ENCODE measurements at regions of chr1 and their contacts with region 1.

Region 1: DNA sequence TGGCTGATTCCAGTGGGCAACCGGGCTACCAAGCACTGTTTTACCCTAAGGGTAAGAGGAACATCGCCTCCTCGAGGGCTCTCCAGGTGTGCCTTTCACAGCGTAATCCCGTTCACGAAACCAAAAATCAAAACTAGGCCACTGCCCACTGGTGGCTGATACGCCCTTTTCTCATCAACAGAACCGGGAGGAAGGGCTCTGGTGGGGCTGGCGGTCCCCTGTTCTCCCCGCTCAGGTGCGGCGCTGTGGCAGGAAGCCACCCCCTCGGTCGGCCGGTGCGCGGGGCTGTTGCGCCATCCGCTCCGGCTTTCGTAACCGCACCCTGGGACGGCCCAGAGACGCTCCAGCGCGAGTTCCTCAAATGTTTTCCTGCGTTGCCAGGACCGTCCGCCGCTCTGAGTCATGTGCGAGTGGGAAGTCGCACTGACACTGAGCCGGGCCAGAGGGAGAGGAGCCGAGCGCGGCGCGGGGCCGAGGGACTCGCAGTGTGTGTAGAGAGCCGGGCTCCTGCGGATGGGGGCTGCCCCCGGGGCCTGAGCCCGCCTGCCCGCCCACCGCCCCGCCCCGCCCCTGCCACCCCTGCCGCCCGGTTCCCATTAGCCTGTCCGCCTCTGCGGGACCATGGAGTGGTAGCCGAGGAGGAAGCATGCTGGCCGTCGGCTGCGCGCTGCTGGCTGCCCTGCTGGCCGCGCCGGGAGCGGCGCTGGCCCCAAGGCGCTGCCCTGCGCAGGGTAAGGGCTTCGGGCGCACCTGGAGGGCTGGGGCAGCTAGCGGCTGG is at the start of gene IL6R:
- DNase-seq: peak; percentile 57 to 91 (median 76)
- ATAC-seq: peak; percentile 65
- H3K4me3 ChIP-seq: peak within 1 kb of the TSS; percentile 89
- H3K4me3 Mint-ChIP-seq: peak within 1 kb of the TSS; percentile 96
- H3K27ac ChIP-seq: peak within 1 kb of the TSS; percentile 81 to 92
- H3K27ac Mint-ChIP-seq: peak within 1 kb of the TSS; percentile 95
- H3K4me1 ChIP-seq: peaks cover 88% of the 10 kb centered on the region
- H3K4me1 Mint-ChIP-seq: peaks cover 84% of the 10 kb centered on the region
- H3K27me3 ChIP-seq: no peaks in the 10 kb centered on the region
- H3K27me3 Mint-ChIP-seq: no peaks in the 10 kb centered on the region
- CTCF ChIP-seq: peak; percentile 73
- total RNA-seq, gene IL6R: 31.7 to 35.0 TPM

Region 2: GRCh38 chr1:154091706-154092105 is 313.5 kb before region 1 on chr1:
- CTCF ChIA-PET with region 1: no interaction called
- POLR2A ChIA-PET with region 1: no interaction called
- intact Hi-C with region 1: no loop called
- DNase-seq: no peak
- ATAC-seq: no peak
- H3K4me3 ChIP-seq: no peak overlapping the region
- H3K4me3 Mint-ChIP-seq: no peak overlapping the region
- H3K27ac ChIP-seq: no peak overlapping the region
- H3K27ac Mint-ChIP-seq: no peak overlapping the region
- H3K4me1 ChIP-seq: no peaks in the 10 kb centered on the region
- H3K4me1 Mint-ChIP-seq: no peaks in the 10 kb centered on the region
- H3K27me3 ChIP-seq: no peaks in the 10 kb centered on the region
- H3K27me3 Mint-ChIP-seq: no peaks in the 10 kb centered on the region
- CTCF ChIP-seq: no peak

Region 3: DNA sequence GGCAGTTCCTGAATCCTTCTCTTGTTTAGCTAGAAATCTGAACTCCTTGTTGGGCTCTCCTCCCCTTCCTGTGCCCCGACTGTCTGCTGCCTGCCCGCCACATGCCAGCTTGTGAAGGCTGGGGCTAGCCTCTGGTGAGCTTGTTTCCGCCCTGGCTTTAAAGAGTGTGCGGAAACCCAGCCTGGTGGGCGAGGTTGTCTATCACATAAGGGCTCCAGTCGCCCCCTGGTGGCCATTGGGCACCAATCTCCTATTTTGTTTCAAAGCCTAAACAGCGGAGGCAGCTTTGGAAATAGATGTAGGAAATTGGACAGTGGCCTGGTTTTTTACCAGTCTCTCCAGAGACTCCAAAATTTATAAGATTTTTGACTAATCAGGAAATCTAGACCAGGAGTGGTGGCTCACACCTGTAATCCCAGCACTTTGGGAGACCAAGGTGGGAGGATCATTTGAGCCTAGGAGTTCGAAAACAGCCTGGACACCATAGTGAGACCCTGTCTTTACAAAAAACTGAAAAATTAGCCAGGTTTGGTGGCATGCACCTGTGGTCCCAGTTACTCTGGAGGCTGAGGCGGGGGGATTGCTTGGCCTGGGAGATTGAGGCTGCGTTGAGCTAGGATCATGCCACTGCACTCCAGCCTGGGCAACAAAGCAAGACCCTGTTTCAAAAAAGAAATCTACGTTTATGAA is 70.0 kb before region 1 on chr1:
- CTCF ChIA-PET with region 1: interaction called, 7 read pairs
- POLR2A ChIA-PET with region 1: interaction called, 22 read pairs
- intact Hi-C with region 1: no loop called
- DNase-seq: peak; percentile 82 to 96 (median 90)
- ATAC-seq: peak; percentile 95
- H3K4me3 ChIP-seq: no peak overlapping the region
- H3K4me3 Mint-ChIP-seq: peak overlapping the region; percentile 77
- H3K27ac ChIP-seq: peak overlapping the region; percentile 42 to 64
- H3K27ac Mint-ChIP-seq: peak overlapping the region; percentile 75
- H3K4me1 ChIP-seq: peaks cover 93% of the 10 kb centered on the region
- H3K4me1 Mint-ChIP-seq: peaks cover 79% of the 10 kb centered on the region
- H3K27me3 ChIP-seq: no peaks in the 10 kb centered on the region
- H3K27me3 Mint-ChIP-seq: no peaks in the 10 kb centered on the region
- CTCF ChIP-seq: peak; percentile 96

Region 4: GRCh38 chr1:154386643-154387352 is 18.4 kb before region 1 on chr1:
- CTCF ChIA-PET with region 1: interaction called, 7 read pairs
- POLR2A ChIA-PET with region 1: interaction called, 58 read pairs
- intact Hi-C with region 1: loop called in 1 of 2 experiments (anchors 2 kb)
- DNase-seq: peak; percentile 43 to 93 (median 65)
- ATAC-seq: peak; percentile 85
- H3K4me3 ChIP-seq: peak overlapping the region; percentile 27
- H3K4me3 Mint-ChIP-seq: peak overlapping the region; percentile 85
- H3K27ac ChIP-seq: peak overlapping the region; percentile 86 to 88
- H3K27ac Mint-ChIP-seq: peak overlapping the region; percentile 89
- H3K4me1 ChIP-seq: peaks cover 48% of the 10 kb centered on the region
- H3K4me1 Mint-ChIP-seq: peaks cover 45% of the 10 kb centered on the region
- H3K27me3 ChIP-seq: no peaks in the 10 kb centered on the region
- H3K27me3 Mint-ChIP-seq: no peaks in the 10 kb centered on the region
- CTCF ChIP-seq: no peak

Region 5: GRCh38 chr1:154442006-154442740 is 37.0 kb after region 1 on chr1:
- CTCF ChIA-PET with region 1: interaction called, 3 read pairs
- POLR2A ChIA-PET with region 1: interaction called, 86 read pairs
- intact Hi-C with region 1: loop called (anchors 2 to 5 kb)
- DNase-seq: peak in 1 of 14 experiments; percentile 47
- ATAC-seq: peak; percentile 6
- H3K4me3 ChIP-seq: peak overlapping the region; percentile 20
- H3K4me3 Mint-ChIP-seq: peak overlapping the region; percentile 81
- H3K27ac ChIP-seq: peak overlapping the region; percentile 72 to 75
- H3K27ac Mint-ChIP-seq: peak overlapping the region; percentile 94
- H3K4me1 ChIP-seq: peaks cover 77% of the 10 kb centered on the region
- H3K4me1 Mint-ChIP-seq: peaks cover 75% of the 10 kb centered on the region
- H3K27me3 ChIP-seq: no peaks in the 10 kb centered on the region
- H3K27me3 Mint-ChIP-seq: no peaks in the 10 kb centered on the region
- CTCF ChIP-seq: peak; percentile 34

Region 6: DNA sequence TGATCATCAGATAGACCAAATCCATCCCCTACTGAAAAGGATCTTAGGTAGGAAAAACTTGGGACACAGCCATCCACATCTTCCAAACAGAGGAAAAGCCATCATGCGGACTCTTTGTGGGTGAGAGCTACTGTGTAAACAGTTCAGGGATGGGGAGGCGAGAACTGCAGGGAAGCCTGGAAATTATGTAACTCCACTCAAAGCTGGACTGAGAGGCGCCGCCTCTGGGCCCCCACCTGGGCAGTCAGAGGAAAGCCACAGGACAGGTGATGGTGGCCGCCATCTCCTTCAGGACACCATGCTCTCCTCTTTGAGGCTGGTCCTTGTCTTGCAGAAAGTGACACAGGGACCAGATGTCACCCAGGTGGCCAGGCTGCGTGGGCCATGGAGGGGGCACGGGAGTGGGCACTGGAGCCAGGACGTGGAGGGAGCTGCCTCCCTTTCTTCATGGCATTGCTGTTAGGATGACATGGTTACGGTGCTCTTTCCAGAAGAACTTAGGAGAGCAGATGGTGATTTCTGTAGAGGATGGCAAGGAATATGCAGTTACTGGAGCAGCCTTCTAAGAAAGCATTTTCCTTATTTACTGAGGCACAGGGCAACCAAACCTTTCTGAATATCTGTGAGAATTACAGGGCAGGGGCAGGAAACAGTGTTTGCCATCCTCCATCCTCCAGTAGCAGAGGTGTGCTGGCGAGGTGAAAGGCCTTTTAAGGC is 64.8 kb after region 1 on chr1:
- CTCF ChIA-PET with region 1: interaction called, 4 read pairs
- POLR2A ChIA-PET with region 1: interaction called, 26 read pairs
- intact Hi-C with region 1: loop called in 1 of 2 experiments (anchors 2 kb)
- DNase-seq: no peak
- ATAC-seq: no peak
- H3K4me3 ChIP-seq: no peak overlapping the region
- H3K4me3 Mint-ChIP-seq: no peak overlapping the region
- H3K27ac ChIP-seq: peak overlapping the region; percentile 15 to 21
- H3K27ac Mint-ChIP-seq: peak overlapping the region; percentile 93
- H3K4me1 ChIP-seq: peaks cover 50% of the 10 kb centered on the region
- H3K4me1 Mint-ChIP-seq: peaks cover 58% of the 10 kb centered on the region
- H3K27me3 ChIP-seq: no peaks in the 10 kb centered on the region
- H3K27me3 Mint-ChIP-seq: no peaks in the 10 kb centered on the region
- CTCF ChIP-seq: no peak

Region 7: GRCh38 chr1:154546264-154547063 is 141.3 kb after region 1 on chr1:
- CTCF ChIA-PET with region 1: interaction called, 4 read pairs
- POLR2A ChIA-PET with region 1: interaction called, 3 read pairs
- intact Hi-C with region 1: loop called in 1 of 2 experiments (anchors 5 kb)
- DNase-seq: peak; percentile 28 to 77 (median 38)
- ATAC-seq: peak; percentile 93
- H3K4me3 ChIP-seq: no peak overlapping the region
- H3K4me3 Mint-ChIP-seq: no peak overlapping the region
- H3K27ac ChIP-seq: no peak overlapping the region
- H3K27ac Mint-ChIP-seq: no peak overlapping the region
- H3K4me1 ChIP-seq: no peaks in the 10 kb centered on the region
- H3K4me1 Mint-ChIP-seq: peaks cover 4% of the 10 kb centered on the region
- H3K27me3 ChIP-seq: no peaks in the 10 kb centered on the region
- H3K27me3 Mint-ChIP-seq: no peaks in the 10 kb centered on the region
- CTCF ChIP-seq: peak; percentile 68

Region 8: GRCh38 chr1:154837672-154838171 is 432.5 kb after region 1 on chr1:
- CTCF ChIA-PET with region 1: no interaction called
- POLR2A ChIA-PET with region 1: no interaction called
- intact Hi-C with region 1: no loop called
- DNase-seq: no peak
- ATAC-seq: no peak
- H3K4me3 ChIP-seq: no peak overlapping the region
- H3K4me3 Mint-ChIP-seq: no peak overlapping the region
- H3K27ac ChIP-seq: no peak overlapping the region
- H3K27ac Mint-ChIP-seq: no peak overlapping the region
- H3K4me1 ChIP-seq: no peaks in the 10 kb centered on the region
- H3K4me1 Mint-ChIP-seq: no peaks in the 10 kb centered on the region
- H3K27me3 ChIP-seq: peaks cover 0 to 3% of the 10 kb centered on the region in 2 experiments
- H3K27me3 Mint-ChIP-seq: no peaks in the 10 kb centered on the region
- CTCF ChIP-seq: no peak

Region 9: DNA sequence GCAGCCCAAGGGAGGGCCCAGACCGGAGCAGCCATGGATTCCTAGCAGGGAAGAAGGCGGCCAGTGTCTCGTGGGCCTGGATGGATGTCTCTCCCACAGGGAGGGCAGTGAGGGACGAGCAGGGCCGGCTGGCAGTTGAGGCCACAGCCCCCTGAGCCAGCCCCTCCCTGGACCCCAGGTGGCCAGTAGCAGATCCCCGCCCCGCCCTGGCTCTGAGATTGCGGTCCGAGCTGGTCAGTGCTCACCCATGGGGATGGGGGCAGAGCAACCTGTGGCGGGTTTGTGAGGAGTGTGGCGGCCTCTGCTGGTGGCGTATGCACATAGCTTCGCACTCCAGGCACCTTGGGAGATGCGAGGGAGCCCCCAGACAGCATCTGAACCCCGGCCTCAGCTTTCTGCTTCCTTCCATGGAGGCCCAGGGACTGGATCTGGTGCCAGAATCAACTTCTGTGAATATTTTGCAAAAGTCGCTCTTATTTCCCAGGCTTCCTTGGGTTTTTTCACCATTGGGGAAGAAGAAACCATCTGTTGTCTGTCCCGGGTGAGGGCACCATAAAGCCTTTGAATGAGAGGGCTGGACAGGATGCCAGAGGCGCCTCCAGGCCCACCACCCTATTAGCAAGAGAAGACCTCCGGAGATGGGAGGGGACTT is 473.3 kb after region 1 on chr1:
- CTCF ChIA-PET with region 1: no interaction called
- POLR2A ChIA-PET with region 1: no interaction called
- intact Hi-C with region 1: no loop called
- DNase-seq: peak; percentile 54 to 82 (median 64)
- ATAC-seq: peak; percentile 91
- H3K4me3 ChIP-seq: no peak overlapping the region
- H3K4me3 Mint-ChIP-seq: no peak overlapping the region
- H3K27ac ChIP-seq: no peak overlapping the region
- H3K27ac Mint-ChIP-seq: no peak overlapping the region
- H3K4me1 ChIP-seq: no peaks in the 10 kb centered on the region
- H3K4me1 Mint-ChIP-seq: no peaks in the 10 kb centered on the region
- H3K27me3 ChIP-seq: no peaks in the 10 kb centered on the region
- H3K27me3 Mint-ChIP-seq: peaks cover 5% of the 10 kb centered on the region
- CTCF ChIP-seq: peak; percentile 91

Measured in CD4-positive, alpha-beta T cell (primary cell).